Heart right ventricle (tissue), 16 donors: ENCODE measurements at regions of chr3 and their contacts with region 1.

Region 1: GRCh38 chr3:167350245-167350862 is 29.7 kb downstream of the ZBBX start:
- DNase-seq: no peak
- ATAC-seq: peak in 1 of 8 donors; percentile 28
- H3K4me3 ChIP-seq: no peak overlapping the region
- H3K27ac ChIP-seq: no peak overlapping the region
- H3K4me1 ChIP-seq: no peaks in the 10 kb centered on the region
- H3K27me3 ChIP-seq: no peaks in the 10 kb centered on the region
- CTCF ChIP-seq: peak; percentile 15 to 74 (median 64)

Region 2: GRCh38 chr3:165854696-165855095 is 1495.7 kb before region 1 on chr3:
- intact Hi-C with region 1: loop called in 2 of 10 experiments (anchors 10 kb)
- DNase-seq: no peak
- ATAC-seq: no peak
- H3K4me3 ChIP-seq: no peak overlapping the region
- H3K27ac ChIP-seq: no peak overlapping the region
- H3K4me1 ChIP-seq: no peaks in the 10 kb centered on the region
- H3K27me3 ChIP-seq: no peaks in the 10 kb centered on the region
- CTCF ChIP-seq: peak; percentile 6 to 65 (median 50)

Region 3: GRCh38 chr3:166013073-166013679 is 1337.2 kb before region 1 on chr3:
- intact Hi-C with region 1: loop called in 6 of 10 experiments (anchors 5 to 10 kb)
- DNase-seq: no peak
- ATAC-seq: no peak
- H3K4me3 ChIP-seq: no peak overlapping the region
- H3K27ac ChIP-seq: no peak overlapping the region
- H3K4me1 ChIP-seq: no peaks in the 10 kb centered on the region
- H3K27me3 ChIP-seq: no peaks in the 10 kb centered on the region
- CTCF ChIP-seq: peak in 7 of 9 donors; percentile 18 to 51 (median 38)

Region 4: DNA sequence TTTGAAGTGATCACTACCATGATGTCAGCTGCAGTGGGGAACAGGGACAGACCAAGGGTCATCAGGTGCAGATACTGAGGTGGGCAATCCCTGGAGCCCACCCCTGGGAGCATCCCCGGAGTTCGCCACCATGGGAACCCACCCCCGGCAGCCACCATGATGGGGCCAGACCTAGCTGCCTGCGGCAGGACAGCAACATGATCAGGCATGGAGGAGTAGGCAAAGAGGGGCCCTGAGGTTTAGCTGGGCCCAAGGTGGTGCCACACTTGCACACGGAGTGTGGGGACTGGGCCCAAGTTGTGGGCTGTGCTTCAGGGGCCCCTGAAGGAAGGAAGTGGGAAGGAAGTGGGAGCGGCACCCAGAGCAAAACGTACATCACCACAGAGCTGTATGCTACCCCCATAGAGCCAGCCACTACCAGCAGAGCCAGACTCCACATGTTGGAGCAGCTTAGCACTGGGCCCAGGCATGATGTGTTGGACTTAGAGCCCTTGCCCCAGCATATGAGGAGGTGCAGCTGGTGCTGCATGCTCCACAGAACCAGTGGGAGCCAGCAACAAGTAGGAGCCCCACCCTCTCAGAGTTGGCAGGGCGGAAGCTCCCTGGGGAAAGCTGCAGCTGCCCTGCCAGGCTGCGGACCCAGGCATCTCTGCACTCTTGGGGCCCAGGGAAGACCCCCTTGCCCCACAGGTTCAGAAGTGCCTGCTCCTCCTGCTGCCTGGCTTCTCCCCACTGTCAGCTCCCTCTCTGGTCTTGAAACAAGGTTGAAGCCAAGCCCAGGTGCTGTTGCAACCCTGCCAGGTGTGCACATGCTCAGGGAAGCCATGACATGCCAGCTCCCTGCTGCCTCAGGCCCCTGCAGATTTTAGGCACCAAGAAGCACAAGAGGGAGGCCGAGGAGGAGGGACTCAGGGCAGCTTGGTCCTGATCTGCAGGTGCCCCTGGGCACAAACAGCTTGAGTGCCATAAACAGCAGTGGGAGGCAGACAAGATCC is 485.6 kb before region 1 on chr3:
- intact Hi-C with region 1: no loop called
- DNase-seq: no peak
- ATAC-seq: no peak
- H3K4me3 ChIP-seq: no peak overlapping the region
- H3K27ac ChIP-seq: no peak overlapping the region
- H3K4me1 ChIP-seq: no peaks in the 10 kb centered on the region
- H3K27me3 ChIP-seq: no peaks in the 10 kb centered on the region
- CTCF ChIP-seq: no peak

Region 5: GRCh38 chr3:168116279-168116678 is 765.9 kb after region 1 on chr3:
- intact Hi-C with region 1: no loop called
- DNase-seq: peak; percentile 24 to 70
- ATAC-seq: peak; percentile 50 to 95 (median 88)
- H3K4me3 ChIP-seq: no peak overlapping the region
- H3K27ac ChIP-seq: peak overlapping the region in 2 of 10 donors; percentile 19 to 34
- H3K4me1 ChIP-seq: peaks cover 0 to 39% (median 17%) of the 10 kb centered on the region in 9 donors
- H3K27me3 ChIP-seq: no peaks in the 10 kb centered on the region
- CTCF ChIP-seq: no peak